Endothelial cell of umbilical vein (primary cell): ENCODE measurements at regions of chr5 and their contacts with region 1.

Region 1: GRCh38 chr5:88729084-88729828 is 153.7 kb downstream of the MEF2C start:
- DNase-seq: peak; percentile 86
- H3K4me3 ChIP-seq: no peak overlapping the region
- H3K27ac ChIP-seq: no peak overlapping the region
- H3K4me1 ChIP-seq: peaks cover 6% of the 10 kb centered on the region
- H3K27me3 ChIP-seq: no peaks in the 10 kb centered on the region
- CTCF ChIP-seq: peak; percentile 49 to 50
- POLR2A ChIP-seq: no peak

Region 2: DNA sequence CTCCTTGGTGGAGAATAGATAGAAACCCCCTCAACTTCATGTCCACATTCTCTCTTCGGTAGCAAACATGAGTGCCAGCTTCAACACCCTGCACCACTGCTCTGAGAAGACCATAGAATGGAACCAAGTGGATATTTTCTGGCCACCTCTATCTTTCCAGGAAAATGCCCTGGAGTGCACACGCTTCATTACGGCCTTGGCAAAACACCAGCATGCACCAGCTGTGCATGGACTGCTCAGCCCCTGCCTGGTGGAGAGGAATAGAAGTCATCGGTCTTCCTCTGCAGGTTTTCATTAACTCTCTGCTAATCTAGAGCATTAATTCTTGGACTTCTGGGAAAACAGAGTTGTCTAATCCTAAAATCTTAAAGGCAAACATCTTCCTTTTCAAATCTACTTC is 249.0 kb before region 1 on chr5:
- CTCF ChIA-PET with region 1: no interaction called
- POLR2A ChIA-PET with region 1: no interaction called
- dilution Hi-C with region 1: no loop called
- intact Hi-C with region 1: no loop called
- DNase-seq: no peak
- H3K4me3 ChIP-seq: no peak overlapping the region
- H3K27ac ChIP-seq: no peak overlapping the region
- H3K4me1 ChIP-seq: no peaks in the 10 kb centered on the region
- H3K27me3 ChIP-seq: no peaks in the 10 kb centered on the region
- CTCF ChIP-seq: no peak
- POLR2A ChIP-seq: no peak

Region 3: DNA sequence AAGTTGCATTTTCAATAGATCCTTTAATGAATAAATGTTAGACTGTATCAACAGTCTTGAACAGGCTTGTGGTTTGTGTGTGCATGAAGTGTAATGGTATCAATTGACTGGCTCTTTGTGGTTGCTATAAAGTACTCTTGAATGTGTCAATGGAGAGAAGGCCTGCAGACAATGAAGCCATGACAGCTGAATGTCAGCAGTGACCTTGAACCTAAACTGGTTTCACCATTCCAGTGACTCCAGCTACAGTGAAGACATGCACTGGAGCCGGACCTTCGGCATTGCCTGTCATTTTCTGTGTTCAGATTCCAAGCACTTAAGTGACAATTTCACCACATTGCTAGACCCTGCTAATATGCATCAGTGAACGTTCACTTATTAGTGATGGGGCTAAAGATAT is 184.6 kb before region 1 on chr5:
- CTCF ChIA-PET with region 1: no interaction called
- POLR2A ChIA-PET with region 1: no interaction called
- dilution Hi-C with region 1: no loop called
- intact Hi-C with region 1: no loop called
- DNase-seq: no peak
- H3K4me3 ChIP-seq: no peak overlapping the region
- H3K27ac ChIP-seq: no peak overlapping the region
- H3K4me1 ChIP-seq: no peaks in the 10 kb centered on the region
- H3K27me3 ChIP-seq: no peaks in the 10 kb centered on the region
- CTCF ChIP-seq: no peak
- POLR2A ChIP-seq: no peak

Region 4: GRCh38 chr5:88785391-88786219 is 56.3 kb after region 1 on chr5:
- CTCF ChIA-PET with region 1: interaction called, 7 read pairs
- POLR2A ChIA-PET with region 1: no interaction called
- dilution Hi-C with region 1: no loop called
- intact Hi-C with region 1: loop called (anchors 1 kb)
- DNase-seq: peak; percentile 96
- H3K4me3 ChIP-seq: peak overlapping the region in 1 of 3 experiments; percentile 46
- H3K27ac ChIP-seq: peak overlapping the region; percentile 97
- H3K4me1 ChIP-seq: peaks cover 33% of the 10 kb centered on the region
- H3K27me3 ChIP-seq: no peaks in the 10 kb centered on the region
- CTCF ChIP-seq: no peak
- POLR2A ChIP-seq: no peak

Region 5: GRCh38 chr5:88875341-88876234 is 146.3 kb after region 1 on chr5:
- CTCF ChIA-PET with region 1: interaction called, 164 read pairs
- POLR2A ChIA-PET with region 1: no interaction called
- dilution Hi-C with region 1: no loop called
- intact Hi-C with region 1: no loop called
- DNase-seq: peak; percentile 62
- H3K4me3 ChIP-seq: peak overlapping the region in 1 of 3 experiments; percentile 30
- H3K27ac ChIP-seq: peak overlapping the region; percentile 65
- H3K4me1 ChIP-seq: peaks cover 43% of the 10 kb centered on the region
- H3K27me3 ChIP-seq: no peaks in the 10 kb centered on the region
- CTCF ChIP-seq: no peak
- POLR2A ChIP-seq: peak; percentile 18

Region 6: DNA sequence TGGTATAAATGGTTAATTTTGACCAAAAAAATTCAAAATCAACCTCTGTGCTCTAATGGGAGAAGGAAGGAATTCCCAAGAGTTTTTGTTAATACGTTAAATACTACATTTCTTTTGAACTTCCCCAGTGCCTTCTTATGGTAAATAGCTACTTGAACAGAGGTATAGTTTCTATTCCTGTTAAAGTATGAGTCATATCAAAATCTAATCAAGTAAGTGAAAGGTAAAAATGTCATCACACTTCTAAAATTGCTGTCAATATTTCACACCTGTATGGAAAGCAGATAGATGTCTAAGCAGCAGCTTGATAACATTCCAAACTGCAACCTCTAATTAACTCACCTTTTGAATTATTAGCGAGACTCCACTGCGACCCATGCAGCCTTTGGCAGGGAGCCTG is 367.8 kb after region 1 on chr5:
- CTCF ChIA-PET with region 1: interaction called, 3 read pairs
- POLR2A ChIA-PET with region 1: no interaction called
- dilution Hi-C with region 1: no loop called
- intact Hi-C with region 1: loop called (anchors 10 kb)
- DNase-seq: no peak
- H3K4me3 ChIP-seq: no peak overlapping the region
- H3K27ac ChIP-seq: no peak overlapping the region
- H3K4me1 ChIP-seq: no peaks in the 10 kb centered on the region
- H3K27me3 ChIP-seq: no peaks in the 10 kb centered on the region
- CTCF ChIP-seq: no peak
- POLR2A ChIP-seq: no peak

Region 7: DNA sequence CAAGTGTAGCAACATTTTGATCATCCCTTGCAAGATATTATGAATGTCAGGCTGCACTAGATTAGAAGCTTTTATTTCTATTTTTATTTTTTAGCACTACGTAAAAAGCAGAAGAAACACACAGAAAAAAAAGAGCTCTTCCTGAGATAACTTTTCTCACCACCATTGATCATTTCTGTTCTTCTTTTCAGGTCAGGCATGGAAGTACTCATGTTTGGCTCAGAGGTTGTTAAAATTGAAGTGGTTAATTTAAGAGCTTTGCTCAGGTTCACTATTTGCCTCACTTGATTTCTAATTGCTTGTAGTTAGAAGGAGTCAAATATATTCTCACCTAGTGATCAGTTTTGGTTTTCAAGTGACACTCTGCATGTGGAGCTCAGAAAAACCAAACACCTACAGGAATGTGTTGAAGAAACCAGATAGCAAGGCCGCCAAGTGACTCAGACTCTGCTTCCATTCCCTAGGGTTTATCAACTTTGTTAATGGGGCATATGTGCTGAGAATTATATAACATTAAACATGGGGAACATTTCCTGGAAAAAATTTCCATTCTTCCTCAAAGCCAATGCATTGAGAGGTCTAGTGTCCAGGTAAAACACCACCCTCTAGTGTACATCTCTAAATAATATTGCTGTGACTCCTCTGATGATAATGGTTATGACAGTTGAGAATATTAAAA is 1000.5 kb after region 1 on chr5:
- CTCF ChIA-PET with region 1: interaction called, 52 read pairs
- POLR2A ChIA-PET with region 1: no interaction called
- dilution Hi-C with region 1: no loop called
- intact Hi-C with region 1: loop called (anchors 5 kb)
- DNase-seq: peak; percentile 3
- H3K4me3 ChIP-seq: no peak overlapping the region
- H3K27ac ChIP-seq: no peak overlapping the region
- H3K4me1 ChIP-seq: no peaks in the 10 kb centered on the region
- H3K27me3 ChIP-seq: peaks cover 2 to 3% of the 10 kb centered on the region in 2 experiments
- CTCF ChIP-seq: no peak
- POLR2A ChIP-seq: no peak

Region 8: DNA sequence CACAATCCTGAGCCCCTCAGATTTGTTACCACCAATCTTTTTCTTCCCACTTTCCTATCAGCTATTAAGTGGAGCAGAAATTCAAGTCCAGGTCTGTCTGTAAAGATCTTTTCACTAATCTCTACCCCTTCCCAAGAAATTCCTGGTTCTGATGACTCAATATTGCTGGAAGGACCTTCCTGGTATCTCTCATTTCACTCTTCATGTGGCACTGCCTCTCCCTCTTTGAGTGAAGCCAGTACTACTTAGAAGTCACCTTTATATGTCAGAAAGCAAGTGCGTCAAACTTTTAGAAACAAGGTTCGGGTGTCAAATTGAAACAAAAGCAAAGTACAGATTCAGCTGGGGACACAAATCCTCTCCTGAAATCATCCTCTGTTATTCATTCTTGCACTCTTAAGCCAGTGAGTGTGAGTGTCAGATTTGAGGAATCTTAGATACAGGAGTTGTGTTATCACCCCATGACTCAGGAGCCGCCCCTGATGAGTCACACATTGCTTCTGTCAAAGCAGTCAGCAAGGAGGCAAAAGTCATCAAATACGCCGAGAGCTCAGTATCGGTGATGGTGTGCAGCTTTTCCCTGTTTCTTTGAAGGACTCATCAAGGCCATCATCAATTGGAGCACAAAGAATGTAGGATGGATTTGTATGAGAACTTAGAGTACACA is 1367.3 kb after region 1 on chr5:
- CTCF ChIA-PET with region 1: no interaction called
- POLR2A ChIA-PET with region 1: no interaction called
- dilution Hi-C with region 1: no loop called
- intact Hi-C with region 1: no loop called
- DNase-seq: peak; percentile 47
- H3K4me3 ChIP-seq: no peak overlapping the region
- H3K27ac ChIP-seq: no peak overlapping the region
- H3K4me1 ChIP-seq: peaks cover 2% of the 10 kb centered on the region
- H3K27me3 ChIP-seq: no peaks in the 10 kb centered on the region
- CTCF ChIP-seq: no peak
- POLR2A ChIP-seq: no peak

Region 9: DNA sequence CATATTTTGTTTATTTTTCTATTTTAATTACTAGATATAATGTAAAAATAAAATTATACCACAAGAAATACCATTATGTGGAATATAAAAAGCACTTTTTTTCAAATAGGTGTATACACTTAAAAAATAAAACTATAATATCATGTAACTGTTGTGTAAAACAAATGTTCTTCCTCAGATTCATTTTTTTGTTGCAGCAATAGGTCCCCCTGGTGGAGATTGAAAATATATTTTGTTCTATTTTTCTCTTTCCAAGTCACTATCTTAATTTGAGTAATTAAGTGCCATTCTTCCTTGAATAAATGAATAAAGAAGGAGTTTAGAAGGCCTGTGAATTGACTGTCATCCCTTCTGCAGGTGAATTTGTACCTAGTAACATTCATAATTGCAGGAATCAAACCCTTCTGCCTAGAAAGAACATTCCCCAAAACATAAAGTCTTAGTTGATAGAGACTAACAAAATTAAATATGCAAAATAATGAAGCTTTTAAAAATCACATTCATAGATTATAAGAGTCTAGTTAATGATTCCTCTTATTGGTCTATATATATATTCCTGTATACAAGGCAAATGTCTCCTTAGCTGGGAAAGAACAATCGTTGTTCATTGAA is 1656.9 kb after region 1 on chr5:
- CTCF ChIA-PET with region 1: interaction called, 35 read pairs
- POLR2A ChIA-PET with region 1: no interaction called
- dilution Hi-C with region 1: no loop called
- intact Hi-C with region 1: loop called (anchors 5 kb)
- DNase-seq: peak; percentile 36
- H3K4me3 ChIP-seq: no peak overlapping the region
- H3K27ac ChIP-seq: no peak overlapping the region
- H3K4me1 ChIP-seq: no peaks in the 10 kb centered on the region
- H3K27me3 ChIP-seq: no peaks in the 10 kb centered on the region
- CTCF ChIP-seq: peak; percentile 20 to 29
- POLR2A ChIP-seq: no peak